ENCODE measurements at regions of chr16 and their contacts with region 1.

Region 1: GRCh38 chr16:56700195-56700594 is 17.9 kb downstream of the MT1X start:
- DNase-seq: no peak
- ATAC-seq: no peak
- H3K4me3 ChIP-seq: no peak overlapping the region
- H3K4me3 Mint-ChIP-seq: no peak overlapping the region
- H3K27ac ChIP-seq: no peak overlapping the region
- H3K27ac Mint-ChIP-seq: no peak overlapping the region
- H3K4me1 ChIP-seq: peaks cover 0 to 4% of the 10 kb centered on the region in 2 donors
- H3K4me1 Mint-ChIP-seq: peaks cover 5% of the 10 kb centered on the region
- H3K27me3 ChIP-seq: peaks cover 0 to 1% (median 0%) of the 10 kb centered on the region in 4 experiments
- H3K27me3 Mint-ChIP-seq: peaks cover 3% of the 10 kb centered on the region
- CTCF ChIP-seq: no peak

Region 2: DNA sequence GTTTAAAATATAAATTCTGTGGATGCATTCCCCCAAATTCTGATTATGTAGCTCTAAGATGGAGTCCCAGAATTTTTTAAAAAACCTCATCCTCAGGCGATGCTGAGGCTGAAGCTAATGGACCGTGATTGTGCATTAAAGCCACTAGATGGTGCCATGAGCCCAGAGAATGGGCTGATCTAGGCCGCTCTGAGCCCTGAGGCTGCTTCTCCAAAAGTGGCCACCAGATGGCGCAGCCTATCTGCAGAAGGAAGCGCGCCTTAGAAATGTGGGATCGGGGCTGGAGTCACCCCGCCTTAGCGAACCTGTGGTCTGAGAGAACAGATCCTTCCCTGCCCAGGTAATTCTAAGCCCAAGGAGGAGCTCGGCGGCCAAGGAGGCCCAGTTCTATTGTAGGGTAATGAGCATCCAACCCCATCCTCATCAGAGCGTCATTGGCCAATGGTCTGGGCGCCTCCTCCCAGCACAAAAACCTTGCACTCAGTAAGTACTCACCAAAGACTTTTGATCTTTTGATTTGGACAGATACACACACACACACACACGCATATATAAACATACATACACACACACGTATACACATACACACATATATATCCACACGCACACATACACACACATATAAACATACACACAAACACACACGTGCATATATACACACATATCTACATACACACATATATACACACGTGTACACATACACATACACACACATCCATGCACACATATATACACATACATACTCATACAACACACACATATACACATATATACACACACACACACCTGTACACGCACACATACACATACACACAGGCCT is 1234.9 kb before region 1 on chr16:
- CTCF ChIA-PET with region 1: interaction called, 11 read pairs
- POLR2A ChIA-PET with region 1: no interaction called
- intact Hi-C with region 1: no loop called
- DNase-seq: peak; percentile 84
- ATAC-seq: peak; percentile 93
- H3K4me3 ChIP-seq: no peak overlapping the region
- H3K4me3 Mint-ChIP-seq: no peak overlapping the region
- H3K27ac ChIP-seq: no peak overlapping the region
- H3K27ac Mint-ChIP-seq: no peak overlapping the region
- H3K4me1 ChIP-seq: no peaks in the 10 kb centered on the region
- H3K4me1 Mint-ChIP-seq: no peaks in the 10 kb centered on the region
- H3K27me3 ChIP-seq: no peaks in the 10 kb centered on the region
- H3K27me3 Mint-ChIP-seq: peaks cover 9% of the 10 kb centered on the region
- CTCF ChIP-seq: peak; percentile 100

Region 3: GRCh38 chr16:56450986-56451752 is 249.0 kb before region 1 on chr16 and contains the starts of genes NUDT21 and OGFOD1:
- CTCF ChIA-PET with region 1: interaction called, 10 read pairs
- POLR2A ChIA-PET with region 1: interaction called, 3 read pairs
- intact Hi-C with region 1: loop called (anchors 1 kb)
- DNase-seq: peak; percentile 95
- ATAC-seq: peak; percentile 99
- H3K4me3 ChIP-seq: peak within 1 kb of the TSS; percentile 68 to 88 (median 85)
- H3K4me3 Mint-ChIP-seq: peak within 1 kb of the TSS; percentile 93
- H3K27ac ChIP-seq: peak within 1 kb of the TSS; percentile 53 to 71
- H3K27ac Mint-ChIP-seq: peak within 1 kb of the TSS; percentile 90
- H3K4me1 ChIP-seq: peaks cover 24 to 28% of the 10 kb centered on the region in 2 donors
- H3K4me1 Mint-ChIP-seq: peaks cover 38% of the 10 kb centered on the region
- H3K27me3 ChIP-seq: no peaks in the 10 kb centered on the region
- H3K27me3 Mint-ChIP-seq: no peaks in the 10 kb centered on the region
- CTCF ChIP-seq: no peak
- total RNA-seq, gene NUDT21: 85.5 and 89.4 TPM in 2 replicates
- total RNA-seq, gene OGFOD1: 28.7 and 30.9 TPM in 2 replicates

Region 4: DNA sequence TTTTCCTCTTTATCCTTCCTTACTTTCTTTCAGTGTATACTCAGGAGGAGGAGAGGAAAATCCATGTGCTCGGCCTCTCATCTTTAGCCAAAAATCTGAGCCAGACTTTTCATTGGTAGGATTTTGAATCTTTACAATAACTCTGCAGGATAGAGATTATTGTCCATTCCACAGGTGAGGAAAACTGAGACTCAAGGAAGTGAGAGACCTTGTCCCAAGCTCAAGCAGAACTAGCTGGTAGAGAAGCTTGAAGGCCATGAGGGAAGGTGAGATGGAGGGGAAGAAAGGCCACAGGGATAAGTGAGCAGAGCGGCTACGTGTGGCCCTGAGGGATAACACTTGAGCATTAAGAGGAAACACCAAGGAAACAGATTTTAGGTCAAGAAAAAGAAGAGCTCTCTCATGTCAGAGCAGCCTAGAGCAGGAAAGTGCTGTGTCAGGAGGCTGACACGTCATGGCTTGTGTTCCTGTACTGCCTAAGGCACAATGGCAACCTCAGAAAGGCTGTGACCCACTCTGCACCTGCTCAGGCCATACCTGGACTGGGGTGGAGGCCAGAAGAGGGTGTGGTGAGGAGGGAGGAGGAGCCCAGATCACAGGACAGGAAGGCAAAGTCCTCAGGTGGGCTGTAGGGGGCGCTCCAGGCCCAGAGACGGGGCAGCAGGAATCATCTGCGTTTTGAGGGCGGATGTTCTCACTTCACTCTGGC is 123.5 kb before region 1 on chr16:
- CTCF ChIA-PET with region 1: interaction called, 53 read pairs
- POLR2A ChIA-PET with region 1: no interaction called
- intact Hi-C with region 1: no loop called
- DNase-seq: peak; percentile 76
- ATAC-seq: peak; percentile 98
- H3K4me3 ChIP-seq: no peak overlapping the region
- H3K4me3 Mint-ChIP-seq: no peak overlapping the region
- H3K27ac ChIP-seq: no peak overlapping the region
- H3K27ac Mint-ChIP-seq: no peak overlapping the region
- H3K4me1 ChIP-seq: peaks cover 0 to 3% of the 10 kb centered on the region in 2 donors
- H3K4me1 Mint-ChIP-seq: peaks cover 1% of the 10 kb centered on the region
- H3K27me3 ChIP-seq: no peaks in the 10 kb centered on the region
- H3K27me3 Mint-ChIP-seq: peaks cover 6% of the 10 kb centered on the region
- CTCF ChIP-seq: peak; percentile 72

Region 5: DNA sequence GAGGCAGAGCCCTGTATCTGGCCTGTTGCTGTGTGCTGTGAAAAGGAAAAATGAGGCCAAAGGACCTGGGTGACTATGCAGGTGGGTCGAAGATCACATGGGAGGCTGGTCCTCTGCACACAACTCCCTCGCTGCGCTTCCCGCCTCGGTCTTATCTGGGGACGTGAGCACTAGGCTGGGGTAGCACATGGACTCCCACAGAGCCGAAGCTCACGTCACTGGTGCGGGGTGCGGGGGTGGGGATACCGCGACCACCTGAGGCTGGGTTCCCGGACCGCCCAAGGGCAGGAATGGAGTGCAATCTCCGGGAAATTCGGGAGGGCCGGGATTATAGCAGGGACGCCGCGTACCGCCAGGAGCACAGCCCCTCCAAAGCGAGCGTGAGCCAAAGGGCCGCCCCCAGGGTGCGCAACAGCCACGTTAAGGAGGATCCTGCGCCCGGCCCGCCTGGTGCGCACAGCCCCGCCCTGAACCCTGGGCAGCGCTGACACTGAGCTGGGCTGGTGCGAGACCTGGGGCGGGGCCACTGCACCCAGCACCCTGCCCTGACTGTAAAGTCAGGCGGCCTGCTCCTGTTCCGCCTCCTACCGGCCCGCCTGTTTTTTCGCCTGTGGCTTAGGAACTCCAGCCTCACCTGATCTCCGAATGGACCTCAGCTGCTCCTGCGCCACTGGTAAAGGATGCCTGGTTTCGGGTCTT is 57.0 kb before region 1 on chr16:
- CTCF ChIA-PET with region 1: interaction called, 12 read pairs
- POLR2A ChIA-PET with region 1: no interaction called
- intact Hi-C with region 1: no loop called
- DNase-seq: peak; percentile 57
- ATAC-seq: peak; percentile 100
- H3K4me3 ChIP-seq: peak overlapping the region in 3 of 5 experiments; percentile 17 to 33 (median 33)
- H3K4me3 Mint-ChIP-seq: peak overlapping the region; percentile 67
- H3K27ac ChIP-seq: no peak overlapping the region
- H3K27ac Mint-ChIP-seq: peak overlapping the region; percentile 6
- H3K4me1 ChIP-seq: peaks cover 18 to 21% of the 10 kb centered on the region in 2 donors
- H3K4me1 Mint-ChIP-seq: peaks cover 17% of the 10 kb centered on the region
- H3K27me3 ChIP-seq: peaks cover 0 to 68% (median 25%) of the 10 kb centered on the region in 4 experiments
- H3K27me3 Mint-ChIP-seq: peaks cover 70% of the 10 kb centered on the region
- CTCF ChIP-seq: no peak

Region 6: DNA sequence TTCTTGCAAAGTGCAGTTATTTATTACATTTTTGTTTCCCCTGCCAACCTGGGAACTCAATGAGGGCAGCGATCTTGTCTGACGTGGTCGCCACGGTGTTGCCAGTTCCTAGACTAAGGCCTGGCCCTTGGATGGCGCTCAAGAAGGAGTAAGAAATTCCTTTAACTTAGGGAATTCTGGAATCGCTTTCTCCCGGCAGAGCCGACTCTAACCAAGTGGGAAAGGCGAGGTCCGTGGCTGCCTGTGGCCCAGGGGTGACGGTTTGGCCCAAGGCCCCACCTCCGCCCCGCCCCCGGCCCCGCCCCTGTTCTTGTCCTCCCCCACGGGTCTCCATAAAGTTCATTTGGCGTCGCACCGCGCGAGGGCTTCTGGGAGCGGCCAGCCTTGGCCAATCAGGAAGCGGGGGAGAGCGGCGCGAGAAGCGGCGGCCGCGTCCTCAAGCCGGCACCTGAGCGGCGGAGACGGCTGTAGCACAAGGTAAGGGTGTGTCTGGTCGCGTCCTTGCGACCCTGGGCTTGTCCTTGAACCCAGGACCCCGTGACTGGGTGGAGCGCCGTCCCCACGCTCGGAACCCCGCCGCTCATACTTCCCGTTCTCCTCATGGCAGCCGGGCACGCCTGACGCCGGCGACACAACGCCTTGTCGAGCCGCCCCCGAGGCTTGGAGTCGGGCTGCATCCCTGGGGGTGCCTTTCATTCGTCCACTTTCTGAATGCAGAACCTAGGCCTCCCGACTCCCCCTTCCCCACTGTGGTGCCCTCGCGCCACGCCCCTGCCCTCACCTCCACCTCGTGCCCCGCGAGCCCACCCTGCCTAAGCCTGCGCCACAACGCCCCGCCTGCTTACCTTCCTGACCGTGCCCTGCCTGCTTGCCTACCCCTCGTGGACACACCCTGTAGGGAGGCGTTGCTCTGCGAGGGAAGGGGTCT is 29.8 kb after region 1 on chr16 and contains the start of gene NUP93:
- CTCF ChIA-PET with region 1: interaction called, 3 read pairs
- POLR2A ChIA-PET with region 1: no interaction called
- intact Hi-C with region 1: loop called (anchors 1 kb)
- DNase-seq: peak; percentile 93
- ATAC-seq: peak; percentile 97
- H3K4me3 ChIP-seq: peak within 1 kb of the TSS; percentile 76 to 92 (median 88)
- H3K4me3 Mint-ChIP-seq: peak within 1 kb of the TSS; percentile 93
- H3K27ac ChIP-seq: peak within 1 kb of the TSS; percentile 64 to 85
- H3K27ac Mint-ChIP-seq: peak within 1 kb of the TSS; percentile 80
- H3K4me1 ChIP-seq: peaks cover 32 to 38% of the 10 kb centered on the region in 2 donors
- H3K4me1 Mint-ChIP-seq: peaks cover 25% of the 10 kb centered on the region
- H3K27me3 ChIP-seq: no peaks in the 10 kb centered on the region
- H3K27me3 Mint-ChIP-seq: no peaks in the 10 kb centered on the region
- CTCF ChIP-seq: no peak
- total RNA-seq, gene NUP93: 64.6 and 67.1 TPM in 2 replicates

Region 7: GRCh38 chr16:56888806-56889205 is 188.6 kb after region 1 on chr16:
- CTCF ChIA-PET with region 1: no interaction called
- POLR2A ChIA-PET with region 1: no interaction called
- intact Hi-C with region 1: no loop called
- DNase-seq: peak; percentile 87
- ATAC-seq: peak; percentile 96
- H3K4me3 ChIP-seq: no peak overlapping the region
- H3K4me3 Mint-ChIP-seq: peak overlapping the region; percentile 53
- H3K27ac ChIP-seq: peak overlapping the region in 1 of 2 donors; percentile 39
- H3K27ac Mint-ChIP-seq: peak overlapping the region; percentile 79
- H3K4me1 ChIP-seq: peaks cover 6 to 18% of the 10 kb centered on the region in 2 donors
- H3K4me1 Mint-ChIP-seq: peaks cover 18% of the 10 kb centered on the region
- H3K27me3 ChIP-seq: no peaks in the 10 kb centered on the region
- H3K27me3 Mint-ChIP-seq: no peaks in the 10 kb centered on the region
- CTCF ChIP-seq: no peak